Activated CD4-positive, alpha-beta T cell treated with anti-CD3 and anti-CD28 coated beads for 36 hours (primary cell): ENCODE measurements at regions of chr3 and their contacts with region 1.

Region 1: DNA sequence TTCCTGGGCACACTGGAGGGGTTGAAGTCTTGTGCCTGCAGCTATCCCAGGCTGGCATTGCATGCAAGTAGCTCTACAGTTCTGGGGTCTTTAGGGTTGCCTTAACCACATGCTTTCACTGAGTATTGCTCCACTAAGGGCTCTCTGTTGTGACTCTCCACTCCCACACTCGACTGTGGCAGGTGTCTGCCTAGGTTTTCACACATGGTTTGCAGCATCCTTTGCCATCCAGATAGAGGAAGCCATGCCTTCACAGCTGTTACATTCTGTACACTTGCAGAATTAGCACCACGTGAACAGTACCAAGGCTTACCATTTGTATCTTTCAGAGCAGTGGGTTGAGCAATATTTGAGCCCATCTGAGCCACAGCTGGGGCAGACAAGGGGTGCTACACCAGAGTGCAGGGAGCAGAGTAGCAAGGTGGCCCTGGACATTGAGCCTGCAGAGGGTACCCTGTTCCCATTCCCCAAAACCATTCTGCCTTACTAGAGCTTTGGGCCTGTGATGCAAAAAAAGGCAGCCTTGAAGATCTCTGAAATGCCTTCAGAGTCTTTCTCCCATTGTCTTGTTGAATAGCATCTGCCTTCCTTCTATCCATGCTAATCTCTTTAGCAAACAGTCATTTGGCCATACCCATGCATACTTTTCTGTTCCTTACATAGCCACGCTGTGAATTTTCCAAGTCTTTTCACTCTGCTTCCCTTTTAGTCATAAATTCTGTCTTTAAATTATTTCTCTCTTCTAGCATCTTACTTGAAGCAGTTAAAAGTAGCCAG is 95.2 kb upstream of the PLCL2 start:
- DNase-seq: no peak
- ATAC-seq: no peak
- H3K4me3 Mint-ChIP-seq: no peak overlapping the region
- H3K27ac Mint-ChIP-seq: no peak overlapping the region
- H3K4me1 Mint-ChIP-seq: peaks cover 22% of the 10 kb centered on the region
- H3K27me3 Mint-ChIP-seq: peaks cover 10% of the 10 kb centered on the region

Region 2: GRCh38 chr3:16741103-16741758 is 48.3 kb before region 1 on chr3:
- CTCF ChIA-PET with region 1: no interaction called
- POLR2A ChIA-PET with region 1: no interaction called
- intact Hi-C with region 1: loop called in 1 of 2 experiments (anchors 2 kb)
- DNase-seq: peak; percentile 65
- ATAC-seq: peak; percentile 79
- H3K4me3 Mint-ChIP-seq: no peak overlapping the region
- H3K27ac Mint-ChIP-seq: no peak overlapping the region
- H3K4me1 Mint-ChIP-seq: peaks cover 12% of the 10 kb centered on the region
- H3K27me3 Mint-ChIP-seq: peaks cover 2% of the 10 kb centered on the region

Region 3: GRCh38 chr3:16842272-16843270 is 53.0 kb after region 1 on chr3:
- CTCF ChIA-PET with region 1: no interaction called
- POLR2A ChIA-PET with region 1: no interaction called
- intact Hi-C with region 1: loop called in 1 of 2 experiments (anchors 2 kb)
- DNase-seq: peak; percentile 87
- ATAC-seq: peak; percentile 96
- H3K4me3 Mint-ChIP-seq: peak overlapping the region; percentile 69
- H3K27ac Mint-ChIP-seq: peak overlapping the region; percentile 95
- H3K4me1 Mint-ChIP-seq: peaks cover 75% of the 10 kb centered on the region
- H3K27me3 Mint-ChIP-seq: no peaks in the 10 kb centered on the region

Region 4: DNA sequence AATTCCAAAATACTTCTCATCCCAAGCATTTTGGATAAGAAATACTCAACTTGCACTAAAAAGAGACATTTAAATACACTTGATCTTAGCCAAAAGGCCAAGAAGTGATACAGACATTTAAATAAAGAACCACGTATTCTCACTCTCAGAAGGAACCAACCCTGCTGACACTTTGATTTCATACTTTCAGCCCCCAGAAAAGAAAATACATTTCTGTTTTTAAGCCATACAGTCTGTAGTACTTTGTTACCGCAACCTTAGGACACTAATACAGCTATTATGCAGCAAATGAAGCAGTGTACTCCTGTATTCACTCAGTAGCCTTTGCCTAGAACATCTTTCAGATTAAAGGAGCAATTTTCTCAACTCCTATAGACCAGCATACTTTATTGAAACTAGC is 866.2 kb after region 1 on chr3:
- CTCF ChIA-PET with region 1: no interaction called
- POLR2A ChIA-PET with region 1: no interaction called
- intact Hi-C with region 1: no loop called
- DNase-seq: no peak
- ATAC-seq: no peak
- H3K4me3 Mint-ChIP-seq: no peak overlapping the region
- H3K27ac Mint-ChIP-seq: no peak overlapping the region
- H3K4me1 Mint-ChIP-seq: peaks cover 5% of the 10 kb centered on the region
- H3K27me3 Mint-ChIP-seq: no peaks in the 10 kb centered on the region